ENCODE measurements at regions of chr5 and their contacts with region 1.

Region 1: GRCh38 chr5:43040287-43041098 is at the start of gene ANXA2R:
- DNase-seq: peak; percentile 84
- H3K4me3 ChIP-seq: peak within 1 kb of the TSS; percentile 72
- CTCF ChIP-seq: peak; percentile 80

Region 2: DNA sequence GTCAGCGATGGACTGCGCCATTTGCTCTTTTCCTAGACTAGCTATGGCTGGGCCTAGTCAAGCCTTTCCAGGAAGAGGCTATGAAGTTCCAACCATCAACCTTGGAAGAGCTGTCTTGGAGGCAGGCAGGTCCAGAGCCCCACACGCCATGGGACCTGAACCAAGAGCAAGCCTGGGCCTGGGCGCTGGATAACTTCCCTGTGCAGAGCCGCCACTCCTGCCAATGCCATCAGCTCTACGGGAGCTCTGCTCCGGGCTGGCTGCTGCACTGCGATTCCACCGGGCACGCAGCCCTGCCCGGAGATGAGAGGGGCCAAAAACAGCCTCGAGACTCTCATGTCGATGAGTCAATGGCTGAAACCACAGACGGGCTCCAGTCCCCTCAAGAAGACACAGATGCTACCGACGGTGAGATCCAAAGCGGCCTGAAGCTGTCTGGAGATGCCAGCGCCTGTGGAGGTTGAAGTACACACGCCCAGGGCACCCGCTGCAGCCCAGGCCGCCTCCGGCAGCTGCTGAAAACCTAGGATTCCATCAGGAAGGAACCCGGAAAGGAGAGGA is 125.1 kb before region 1 on chr5:
- CTCF ChIA-PET with region 1: interaction called, 127 read pairs
- POLR2A ChIA-PET with region 1: no interaction called
- DNase-seq: no peak
- H3K4me3 ChIP-seq: no peak overlapping the region
- CTCF ChIP-seq: no peak

Region 3: DNA sequence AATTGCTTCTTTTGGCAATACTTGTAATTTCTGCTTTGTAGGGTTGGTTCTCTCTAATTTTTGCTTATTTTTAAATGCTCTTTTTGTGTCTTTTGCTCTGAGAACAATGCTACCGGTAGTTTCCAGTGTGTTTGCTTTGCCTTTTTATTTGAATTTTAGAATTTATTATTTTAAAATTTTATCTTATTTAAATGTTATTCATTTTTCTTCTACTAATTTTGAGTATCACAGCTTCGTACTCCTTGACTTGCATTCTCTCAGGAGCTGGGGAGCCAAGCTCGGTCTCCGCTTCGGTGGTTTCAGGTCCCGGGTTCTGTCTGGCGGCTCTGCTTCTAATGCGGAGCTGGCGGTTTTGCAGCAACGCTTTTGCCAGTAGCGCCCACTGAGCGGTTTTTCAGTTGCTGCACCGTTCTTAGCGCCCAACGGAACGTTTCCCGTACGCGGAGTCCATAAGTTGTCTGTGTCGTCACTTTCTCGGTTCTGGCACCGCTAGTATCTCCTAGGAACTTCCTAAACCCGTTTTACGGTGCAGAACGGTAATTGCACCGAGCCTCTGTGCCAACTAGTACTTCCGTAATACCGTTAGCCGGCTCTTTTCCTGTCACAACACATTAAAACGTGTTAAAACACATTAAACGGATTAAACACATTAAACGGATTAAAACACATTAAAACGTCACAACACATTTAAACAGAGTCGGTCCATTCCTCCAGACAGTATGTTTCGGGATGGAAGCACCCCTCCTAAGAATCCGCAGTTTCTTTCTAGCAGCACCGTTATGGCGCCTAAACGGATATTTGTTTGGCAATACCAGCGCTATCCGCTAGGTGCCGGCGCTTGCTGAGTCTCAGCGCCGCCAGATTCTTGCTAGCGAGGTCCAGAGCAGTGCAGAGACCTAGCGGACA is 46.0 kb before region 1 on chr5:
- CTCF ChIA-PET with region 1: interaction called, 81 read pairs
- POLR2A ChIA-PET with region 1: interaction called, 8 read pairs
- DNase-seq: no peak
- H3K4me3 ChIP-seq: peak overlapping the region; percentile 69
- CTCF ChIP-seq: peak; percentile 83

Region 4: DNA sequence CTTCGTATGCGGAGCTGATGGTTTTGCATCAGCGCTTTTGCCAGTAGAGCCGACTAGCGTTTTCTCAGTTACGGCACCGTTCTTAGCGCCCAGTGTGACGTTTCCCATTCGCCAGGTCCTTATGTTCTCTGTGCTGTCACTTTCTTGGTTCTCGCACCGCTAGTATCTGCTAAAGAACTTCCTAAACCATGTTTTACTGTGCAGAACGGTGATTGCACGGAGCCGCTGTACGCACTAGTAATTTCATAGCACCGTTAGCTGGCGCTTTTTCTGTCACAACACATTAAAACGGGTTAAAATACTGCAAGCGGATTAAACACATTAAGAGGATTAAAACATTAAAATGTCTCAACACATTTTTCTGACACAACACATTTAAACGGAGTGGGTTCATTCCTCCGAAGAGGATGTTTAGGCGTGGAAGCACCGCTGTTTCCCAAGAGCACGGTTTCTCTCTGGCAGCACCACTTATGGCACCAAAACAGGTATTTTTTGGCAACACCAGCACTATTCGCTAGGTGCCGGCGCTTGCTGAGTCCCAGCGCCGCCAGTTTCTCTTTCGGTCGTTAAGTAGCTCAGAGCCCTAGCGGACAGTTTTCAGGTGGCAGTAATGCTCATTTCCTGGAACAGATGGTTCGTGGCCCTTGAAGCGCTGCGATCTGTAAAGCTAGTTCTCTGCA is 20.7 kb before region 1 on chr5:
- CTCF ChIA-PET with region 1: interaction called, 27 read pairs
- POLR2A ChIA-PET with region 1: interaction called, 24 read pairs
- DNase-seq: no peak
- H3K4me3 ChIP-seq: peak overlapping the region; percentile 74
- CTCF ChIP-seq: peak; percentile 70

Region 5: GRCh38 chr5:43061352-43062075 is 21.0 kb after region 1 on chr5:
- CTCF ChIA-PET with region 1: interaction called, 45 read pairs
- POLR2A ChIA-PET with region 1: interaction called, 28 read pairs
- DNase-seq: no peak
- H3K4me3 ChIP-seq: no peak overlapping the region
- CTCF ChIP-seq: no peak

Region 6: GRCh38 chr5:43066799-43067741 is 26.6 kb after region 1 on chr5:
- CTCF ChIA-PET with region 1: interaction called, 45 read pairs
- POLR2A ChIA-PET with region 1: interaction called, 28 read pairs
- DNase-seq: no peak
- H3K4me3 ChIP-seq: peak overlapping the region; percentile 86
- CTCF ChIP-seq: no peak

Region 7: GRCh38 chr5:43096916-43097315 is 56.4 kb after region 1 on chr5:
- CTCF ChIA-PET with region 1: no interaction called
- POLR2A ChIA-PET with region 1: no interaction called
- DNase-seq: no peak
- H3K4me3 ChIP-seq: no peak overlapping the region
- CTCF ChIP-seq: no peak

Region 8: GRCh38 chr5:43227655-43228054 is 187.2 kb after region 1 on chr5:
- CTCF ChIA-PET with region 1: no interaction called
- POLR2A ChIA-PET with region 1: no interaction called
- DNase-seq: no peak
- H3K4me3 ChIP-seq: no peak overlapping the region
- CTCF ChIP-seq: no peak